ENCODE measurements at regions of chr11 and their contacts with region 1.

Region 1: DNA sequence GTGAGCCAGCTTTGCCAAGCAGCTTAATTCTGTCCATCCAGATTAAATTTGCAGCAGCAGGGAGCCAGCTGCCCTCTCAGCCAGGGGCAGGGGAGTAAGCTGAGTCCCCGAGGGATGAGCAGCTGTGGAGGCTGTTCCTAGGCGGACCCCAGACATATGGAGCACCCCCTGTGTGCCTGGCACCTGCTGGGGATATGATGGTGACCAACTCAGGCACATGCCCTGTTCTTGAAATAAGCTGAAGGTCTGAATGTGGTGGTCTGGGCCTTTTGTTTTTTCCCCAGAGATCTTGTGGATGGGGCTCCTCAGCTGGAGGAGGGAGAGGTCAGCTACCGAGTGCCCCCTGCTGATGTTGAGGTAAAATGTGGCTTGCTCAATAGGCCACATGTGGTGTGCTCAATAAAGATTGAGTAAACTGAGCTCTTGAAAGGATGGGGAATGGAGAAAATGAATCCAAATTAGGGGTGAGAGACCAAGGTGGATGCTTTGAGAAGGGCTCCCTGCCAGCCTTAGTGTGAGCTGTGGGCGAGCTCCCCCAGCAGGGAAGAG is 103.3 kb upstream of the NNMT start:
- DNase-seq: peak in 2 of 9 experiments; percentile 24 to 31
- ATAC-seq: no peak
- H3K4me3 ChIP-seq: no peak overlapping the region
- H3K4me3 Mint-ChIP-seq: no peak overlapping the region
- H3K27ac ChIP-seq: no peak overlapping the region
- H3K27ac Mint-ChIP-seq: no peak overlapping the region
- H3K4me1 ChIP-seq: no peaks in the 10 kb centered on the region
- H3K4me1 Mint-ChIP-seq: peaks cover 44% of the 10 kb centered on the region
- H3K27me3 ChIP-seq: no peaks in the 10 kb centered on the region
- H3K27me3 Mint-ChIP-seq: no peaks in the 10 kb centered on the region
- CTCF ChIP-seq: no peak

Region 2: GRCh38 chr11:113162592-113162962 is 1030.3 kb before region 1 on chr11:
- CTCF ChIA-PET with region 1: no interaction called
- POLR2A ChIA-PET with region 1: no interaction called
- intact Hi-C with region 1: no loop called
- DNase-seq: no peak
- ATAC-seq: no peak
- H3K4me3 ChIP-seq: no peak overlapping the region
- H3K4me3 Mint-ChIP-seq: no peak overlapping the region
- H3K27ac ChIP-seq: no peak overlapping the region
- H3K27ac Mint-ChIP-seq: no peak overlapping the region
- H3K4me1 ChIP-seq: no peaks in the 10 kb centered on the region
- H3K4me1 Mint-ChIP-seq: no peaks in the 10 kb centered on the region
- H3K27me3 ChIP-seq: no peaks in the 10 kb centered on the region
- H3K27me3 Mint-ChIP-seq: peaks cover 2% of the 10 kb centered on the region
- CTCF ChIP-seq: no peak

Region 3: GRCh38 chr11:113926273-113927197 is 266.4 kb before region 1 on chr11:
- CTCF ChIA-PET with region 1: no interaction called
- POLR2A ChIA-PET with region 1: no interaction called
- intact Hi-C with region 1: no loop called
- DNase-seq: no peak
- ATAC-seq: no peak
- H3K4me3 ChIP-seq: no peak overlapping the region
- H3K4me3 Mint-ChIP-seq: no peak overlapping the region
- H3K27ac ChIP-seq: no peak overlapping the region
- H3K27ac Mint-ChIP-seq: no peak overlapping the region
- H3K4me1 ChIP-seq: no peaks in the 10 kb centered on the region
- H3K4me1 Mint-ChIP-seq: no peaks in the 10 kb centered on the region
- H3K27me3 ChIP-seq: peaks cover 0 to 3% of the 10 kb centered on the region in 2 experiments
- H3K27me3 Mint-ChIP-seq: peaks cover 23% of the 10 kb centered on the region
- CTCF ChIP-seq: no peak

Region 4: DNA sequence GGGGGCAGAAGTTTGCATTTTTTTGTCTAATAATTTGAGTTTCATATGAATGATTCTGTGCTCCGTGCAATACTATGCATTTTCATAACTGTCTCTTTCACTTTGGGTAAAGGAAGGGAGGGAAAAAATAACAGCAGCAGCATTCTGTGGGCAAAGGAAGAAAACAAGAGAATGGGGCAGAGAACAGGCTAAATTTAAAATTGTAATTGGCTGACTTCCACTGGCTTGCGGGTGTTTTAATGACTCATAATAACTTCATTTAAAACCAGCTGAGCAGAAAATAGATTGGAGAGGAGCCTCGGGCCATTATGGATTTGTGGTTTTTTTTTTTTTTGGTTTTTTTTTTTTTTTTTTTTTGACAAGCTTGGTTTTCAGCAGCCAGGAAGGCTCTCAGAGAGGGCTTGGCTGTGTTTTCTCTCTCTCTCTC is 26.0 kb before region 1 on chr11:
- CTCF ChIA-PET with region 1: interaction called, 12 read pairs
- POLR2A ChIA-PET with region 1: interaction called, 8 read pairs
- intact Hi-C with region 1: no loop called
- DNase-seq: peak in 2 of 9 experiments; percentile 62 to 74
- ATAC-seq: peak; percentile 45
- H3K4me3 ChIP-seq: no peak overlapping the region
- H3K4me3 Mint-ChIP-seq: peak overlapping the region; percentile 64
- H3K27ac ChIP-seq: no peak overlapping the region
- H3K27ac Mint-ChIP-seq: peak overlapping the region; percentile 77
- H3K4me1 ChIP-seq: peaks cover 84% of the 10 kb centered on the region
- H3K4me1 Mint-ChIP-seq: peaks cover 97% of the 10 kb centered on the region
- H3K27me3 ChIP-seq: no peaks in the 10 kb centered on the region
- H3K27me3 Mint-ChIP-seq: no peaks in the 10 kb centered on the region
- CTCF ChIP-seq: no peak

Region 5: DNA sequence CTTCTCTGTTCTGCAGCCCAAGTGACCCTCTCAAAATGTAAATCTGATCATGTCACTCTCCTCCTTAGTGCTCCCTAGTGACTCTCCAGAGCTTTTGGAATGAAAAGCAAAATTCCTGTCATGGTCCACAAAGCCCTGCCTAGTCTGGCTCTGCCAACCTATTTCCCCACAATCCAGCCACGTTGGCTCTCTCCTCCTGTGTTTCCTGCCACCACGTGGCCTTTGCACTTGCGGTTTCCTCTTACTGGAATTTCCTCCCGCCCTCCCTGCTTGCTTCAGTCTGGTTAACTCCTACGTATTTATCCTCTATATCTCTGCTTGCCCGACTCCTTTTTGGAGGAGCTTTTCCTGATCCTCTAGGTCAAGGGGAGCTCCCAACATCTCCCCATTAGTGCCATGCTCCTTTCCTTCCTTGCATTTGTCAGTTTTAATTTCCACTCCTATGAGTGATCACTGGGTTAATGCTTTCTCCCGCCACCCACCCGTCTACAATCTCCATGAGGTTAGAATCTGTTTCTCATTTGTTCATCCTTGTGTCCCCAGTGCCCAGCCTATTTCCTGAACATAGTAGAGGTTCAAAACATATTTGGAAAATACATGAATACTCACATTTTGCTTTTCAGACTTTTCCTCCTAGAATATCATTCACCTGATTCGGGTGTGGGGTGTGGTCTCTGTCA is 114.7 kb after region 1 on chr11:
- CTCF ChIA-PET with region 1: no interaction called
- POLR2A ChIA-PET with region 1: no interaction called
- intact Hi-C with region 1: no loop called
- DNase-seq: no peak
- ATAC-seq: no peak
- H3K4me3 ChIP-seq: no peak overlapping the region
- H3K4me3 Mint-ChIP-seq: no peak overlapping the region
- H3K27ac ChIP-seq: no peak overlapping the region
- H3K27ac Mint-ChIP-seq: no peak overlapping the region
- H3K4me1 ChIP-seq: no peaks in the 10 kb centered on the region
- H3K4me1 Mint-ChIP-seq: no peaks in the 10 kb centered on the region
- H3K27me3 ChIP-seq: no peaks in the 10 kb centered on the region
- H3K27me3 Mint-ChIP-seq: peaks cover 48% of the 10 kb centered on the region
- CTCF ChIP-seq: no peak